CD8-positive, alpha-beta T cell (primary cell): ENCODE measurements at regions of chr6 and their contacts with region 1.

Region 1: GRCh38 chr6:118551063-118552053 is 3.3 kb downstream of the PLN start:
- DNase-seq: peak in 2 of 9 experiments; percentile 54 to 70
- ATAC-seq: peak; percentile 97
- H3K4me3 ChIP-seq: no peak overlapping the region
- H3K4me3 Mint-ChIP-seq: peak overlapping the region; percentile 8
- H3K27ac ChIP-seq: no peak overlapping the region
- H3K27ac Mint-ChIP-seq: peak overlapping the region; percentile 73
- H3K4me1 ChIP-seq: peaks cover 7% of the 10 kb centered on the region
- H3K4me1 Mint-ChIP-seq: peaks cover 51% of the 10 kb centered on the region
- H3K27me3 ChIP-seq: no peaks in the 10 kb centered on the region
- H3K27me3 Mint-ChIP-seq: no peaks in the 10 kb centered on the region
- CTCF ChIP-seq: peak; percentile 79

Region 2: GRCh38 chr6:117711369-117711768 is 840.0 kb before region 1 on chr6:
- CTCF ChIA-PET with region 1: no interaction called
- POLR2A ChIA-PET with region 1: no interaction called
- intact Hi-C with region 1: loop called in 1 of 2 experiments (anchors 10 kb)
- DNase-seq: peak in 2 of 9 experiments; percentile 24 to 35
- ATAC-seq: no peak
- H3K4me3 ChIP-seq: no peak overlapping the region
- H3K4me3 Mint-ChIP-seq: no peak overlapping the region
- H3K27ac ChIP-seq: no peak overlapping the region
- H3K27ac Mint-ChIP-seq: no peak overlapping the region
- H3K4me1 ChIP-seq: no peaks in the 10 kb centered on the region
- H3K4me1 Mint-ChIP-seq: peaks cover 2% of the 10 kb centered on the region
- H3K27me3 ChIP-seq: no peaks in the 10 kb centered on the region
- H3K27me3 Mint-ChIP-seq: no peaks in the 10 kb centered on the region
- CTCF ChIP-seq: no peak

Region 3: DNA sequence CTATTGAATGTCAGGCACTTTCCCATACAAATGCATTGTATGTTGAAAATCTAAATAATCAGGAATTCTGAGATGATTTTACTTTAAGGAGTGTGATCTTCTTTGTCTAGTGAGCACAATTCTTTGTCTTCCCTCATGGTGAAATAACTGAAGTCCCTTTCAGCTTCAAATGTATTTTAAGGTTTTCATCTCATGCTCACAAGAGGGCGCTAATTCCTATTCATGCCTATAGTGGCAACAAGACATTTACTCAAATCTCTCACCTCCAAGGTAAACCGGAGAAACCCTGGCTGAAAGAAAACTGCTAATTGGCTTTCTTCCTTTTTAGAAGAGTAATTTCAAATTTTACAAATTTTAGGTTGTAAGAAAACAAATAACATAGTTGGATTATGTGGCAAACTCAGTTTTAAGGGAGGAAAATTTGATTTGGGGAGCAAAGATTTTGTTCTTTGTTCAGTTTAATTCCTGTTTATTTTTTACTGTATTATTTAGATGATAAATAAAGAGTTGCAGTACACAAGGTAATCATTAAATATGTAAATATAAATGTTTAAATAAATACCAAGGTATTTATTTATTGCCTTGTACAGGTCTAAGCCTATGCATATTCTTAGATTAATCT is 575.2 kb before region 1 on chr6:
- CTCF ChIA-PET with region 1: interaction called, 6 read pairs
- POLR2A ChIA-PET with region 1: no interaction called
- intact Hi-C with region 1: loop called (anchors 1 kb)
- DNase-seq: peak in 2 of 9 experiments; percentile 38 to 55
- ATAC-seq: no peak
- H3K4me3 ChIP-seq: no peak overlapping the region
- H3K4me3 Mint-ChIP-seq: no peak overlapping the region
- H3K27ac ChIP-seq: no peak overlapping the region
- H3K27ac Mint-ChIP-seq: no peak overlapping the region
- H3K4me1 ChIP-seq: no peaks in the 10 kb centered on the region
- H3K4me1 Mint-ChIP-seq: no peaks in the 10 kb centered on the region
- H3K27me3 ChIP-seq: no peaks in the 10 kb centered on the region
- H3K27me3 Mint-ChIP-seq: peaks cover 19% of the 10 kb centered on the region
- CTCF ChIP-seq: peak; percentile 56

Region 4: DNA sequence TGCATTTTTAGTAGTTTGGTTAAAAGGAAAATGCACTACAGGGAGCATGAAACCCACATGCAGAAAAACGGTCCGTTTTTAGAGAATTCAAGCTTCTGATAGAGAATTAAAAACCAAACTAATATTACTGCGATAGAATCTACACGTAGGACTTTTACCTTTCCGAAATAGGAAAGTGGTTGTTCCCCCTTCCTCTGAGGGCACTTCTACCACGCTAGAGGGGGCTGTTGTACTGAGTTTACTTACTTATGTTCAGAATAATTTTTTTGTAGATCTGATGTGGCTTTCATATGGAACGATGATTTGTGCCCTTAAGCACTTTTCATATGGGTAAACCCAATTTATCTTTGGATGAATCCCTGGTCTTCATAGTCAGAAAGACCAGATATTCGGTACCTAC is 267.6 kb before region 1 on chr6:
- CTCF ChIA-PET with region 1: interaction called, 5 read pairs
- POLR2A ChIA-PET with region 1: no interaction called
- intact Hi-C with region 1: loop called (anchors 1 to 2 kb)
- DNase-seq: peak in 8 of 9 experiments; percentile 14 to 74 (median 52)
- ATAC-seq: peak; percentile 61
- H3K4me3 ChIP-seq: no peak overlapping the region
- H3K4me3 Mint-ChIP-seq: no peak overlapping the region
- H3K27ac ChIP-seq: no peak overlapping the region
- H3K27ac Mint-ChIP-seq: no peak overlapping the region
- H3K4me1 ChIP-seq: no peaks in the 10 kb centered on the region
- H3K4me1 Mint-ChIP-seq: peaks cover 2% of the 10 kb centered on the region
- H3K27me3 ChIP-seq: no peaks in the 10 kb centered on the region
- H3K27me3 Mint-ChIP-seq: peaks cover 11% of the 10 kb centered on the region
- CTCF ChIP-seq: peak; percentile 61

Region 5: GRCh38 chr6:118485601-118486550 is 65.5 kb before region 1 on chr6:
- CTCF ChIA-PET with region 1: no interaction called
- POLR2A ChIA-PET with region 1: no interaction called
- intact Hi-C with region 1: loop called (anchors 5 kb)
- DNase-seq: no peak
- ATAC-seq: no peak
- H3K4me3 ChIP-seq: no peak overlapping the region
- H3K4me3 Mint-ChIP-seq: no peak overlapping the region
- H3K27ac ChIP-seq: no peak overlapping the region
- H3K27ac Mint-ChIP-seq: no peak overlapping the region
- H3K4me1 ChIP-seq: no peaks in the 10 kb centered on the region
- H3K4me1 Mint-ChIP-seq: no peaks in the 10 kb centered on the region
- H3K27me3 ChIP-seq: no peaks in the 10 kb centered on the region
- H3K27me3 Mint-ChIP-seq: no peaks in the 10 kb centered on the region
- CTCF ChIP-seq: no peak

Region 6: DNA sequence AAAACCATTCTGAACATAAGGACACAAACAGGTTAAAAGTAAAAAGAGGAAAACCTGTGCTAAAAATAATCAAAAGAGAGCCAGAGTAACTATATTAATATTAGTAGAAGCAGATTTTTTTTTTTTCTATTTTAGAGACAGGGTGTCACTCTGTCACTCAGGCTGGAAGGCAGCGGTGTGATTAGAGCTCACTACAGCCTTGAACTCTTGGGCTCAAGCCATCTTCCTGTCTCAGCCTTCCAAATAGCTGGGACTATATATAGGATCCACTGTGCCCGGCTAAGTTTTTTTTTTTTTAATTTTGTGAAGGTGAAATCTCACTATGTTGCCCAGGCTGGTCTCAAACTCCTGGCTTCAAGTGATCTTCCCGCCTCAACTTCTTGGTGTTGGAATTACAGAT is 36.7 kb before region 1 on chr6:
- CTCF ChIA-PET with region 1: no interaction called
- POLR2A ChIA-PET with region 1: no interaction called
- intact Hi-C with region 1: loop called in 1 of 2 experiments (anchors 5 kb)
- DNase-seq: no peak
- ATAC-seq: no peak
- H3K4me3 ChIP-seq: no peak overlapping the region
- H3K4me3 Mint-ChIP-seq: no peak overlapping the region
- H3K27ac ChIP-seq: no peak overlapping the region
- H3K27ac Mint-ChIP-seq: no peak overlapping the region
- H3K4me1 ChIP-seq: no peaks in the 10 kb centered on the region
- H3K4me1 Mint-ChIP-seq: peaks cover 50% of the 10 kb centered on the region
- H3K27me3 ChIP-seq: no peaks in the 10 kb centered on the region
- H3K27me3 Mint-ChIP-seq: no peaks in the 10 kb centered on the region
- CTCF ChIP-seq: no peak

Region 7: GRCh38 chr6:119078376-119079282 is 527.3 kb after region 1 on chr6 and contains the start of gene FAM184A:
- CTCF ChIA-PET with region 1: no interaction called
- POLR2A ChIA-PET with region 1: no interaction called
- intact Hi-C with region 1: loop called in 1 of 2 experiments (anchors 5 kb)
- DNase-seq: peak; percentile 50 to 86 (median 71)
- ATAC-seq: peak; percentile 74
- H3K4me3 ChIP-seq: peak within 1 kb of the TSS; percentile 58 to 66
- H3K4me3 Mint-ChIP-seq: peak within 1 kb of the TSS; percentile 94
- H3K27ac ChIP-seq: peak within 1 kb of the TSS; percentile 34 to 46
- H3K27ac Mint-ChIP-seq: peak within 1 kb of the TSS; percentile 91
- H3K4me1 ChIP-seq: peaks cover 25% of the 10 kb centered on the region
- H3K4me1 Mint-ChIP-seq: peaks cover 32% of the 10 kb centered on the region
- H3K27me3 ChIP-seq: no peaks in the 10 kb centered on the region
- H3K27me3 Mint-ChIP-seq: no peaks in the 10 kb centered on the region
- CTCF ChIP-seq: no peak
- total RNA-seq, gene FAM184A: 0.50 to 0.79 TPM

Region 8: DNA sequence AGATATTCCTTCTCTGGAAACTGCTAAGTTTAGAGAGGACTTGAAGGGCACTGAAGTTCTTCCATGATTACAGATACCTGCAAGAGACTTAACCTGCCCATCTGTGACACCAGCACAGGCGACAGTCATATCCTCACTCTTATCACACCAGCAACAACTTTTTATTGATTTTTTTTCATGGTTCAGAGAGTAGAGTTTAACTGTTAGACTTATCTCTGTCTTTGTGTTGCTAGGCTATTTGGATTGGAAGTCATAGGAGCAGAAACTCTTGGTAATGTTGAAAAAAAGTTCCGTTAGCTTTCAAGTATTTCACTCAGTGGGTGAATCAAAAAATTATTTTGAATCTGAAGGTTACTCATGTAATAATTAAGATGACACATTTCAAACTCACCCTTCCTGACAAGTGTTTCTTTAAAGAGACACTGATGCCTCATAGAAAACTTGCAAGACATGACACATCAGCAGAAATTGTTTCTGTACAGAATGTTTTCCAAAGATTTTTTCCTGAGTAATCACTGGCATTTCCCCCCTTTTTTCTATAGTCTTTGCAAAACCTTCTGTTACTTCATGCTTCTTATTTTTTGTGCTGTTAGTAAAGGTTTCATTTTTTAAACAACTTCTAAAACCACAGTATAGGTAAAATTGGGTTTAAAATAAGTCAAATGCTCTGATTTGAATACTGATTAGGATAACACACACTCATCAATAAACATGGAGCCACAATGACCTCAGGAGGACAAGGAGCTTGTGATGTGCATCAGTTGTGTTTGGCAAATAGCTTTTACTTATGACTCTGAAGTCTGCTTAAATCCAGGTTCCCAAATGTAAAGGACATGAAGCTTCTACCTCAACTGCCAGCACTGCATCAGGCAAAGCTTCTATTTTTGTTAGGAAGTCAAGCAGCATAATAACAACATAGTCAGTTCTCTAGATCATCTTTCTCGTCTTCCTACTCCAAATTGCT is 1051.1 kb after region 1 on chr6:
- CTCF ChIA-PET with region 1: no interaction called
- POLR2A ChIA-PET with region 1: no interaction called
- intact Hi-C with region 1: no loop called
- DNase-seq: no peak
- ATAC-seq: no peak
- H3K4me3 ChIP-seq: no peak overlapping the region
- H3K4me3 Mint-ChIP-seq: no peak overlapping the region
- H3K27ac ChIP-seq: no peak overlapping the region
- H3K27ac Mint-ChIP-seq: no peak overlapping the region
- H3K4me1 ChIP-seq: no peaks in the 10 kb centered on the region
- H3K4me1 Mint-ChIP-seq: no peaks in the 10 kb centered on the region
- H3K27me3 ChIP-seq: no peaks in the 10 kb centered on the region
- H3K27me3 Mint-ChIP-seq: no peaks in the 10 kb centered on the region
- CTCF ChIP-seq: no peak